PC-3 (cell line): ENCODE measurements at regions of chr11 and their contacts with region 1.

Region 1: GRCh38 chr11:125874556-125875124 is 12.8 kb upstream of the HYLS1 start:
- DNase-seq: peak; percentile 90
- ATAC-seq: peak; percentile 99
- H3K4me3 ChIP-seq: peak overlapping the region; percentile 51
- H3K27ac ChIP-seq: no peak overlapping the region
- H3K4me1 ChIP-seq: 0 out of 2 replicates have a peak, but pooled peaks cover 3% of the 10 kb centered on the region
- H3K27me3 ChIP-seq: no peaks in the 10 kb centered on the region
- CTCF ChIP-seq: peak; percentile 94

Region 2: GRCh38 chr11:125164422-125165110 is 710.1 kb before region 1 on chr11 and contains the start of gene PKNOX2:
- CTCF ChIA-PET with region 1: no interaction called
- POLR2A ChIA-PET with region 1: no interaction called
- intact Hi-C with region 1: loop called (anchors 10 kb)
- DNase-seq: peak; percentile 63
- ATAC-seq: peak; percentile 63
- H3K4me3 ChIP-seq: peak within 1 kb of the TSS; percentile 78
- H3K27ac ChIP-seq: no peak within 1 kb of the TSS
- H3K4me1 ChIP-seq: peaks cover 7% of the 10 kb centered on the region; the same call in 1 of the 2 replicates
- H3K27me3 ChIP-seq: peaks cover 28% of the 10 kb centered on the region
- CTCF ChIP-seq: peak; percentile 54
- total RNA-seq, gene PKNOX2: 0.12 TPM in 1 of 2 replicates, not detected in the other

Region 3: DNA sequence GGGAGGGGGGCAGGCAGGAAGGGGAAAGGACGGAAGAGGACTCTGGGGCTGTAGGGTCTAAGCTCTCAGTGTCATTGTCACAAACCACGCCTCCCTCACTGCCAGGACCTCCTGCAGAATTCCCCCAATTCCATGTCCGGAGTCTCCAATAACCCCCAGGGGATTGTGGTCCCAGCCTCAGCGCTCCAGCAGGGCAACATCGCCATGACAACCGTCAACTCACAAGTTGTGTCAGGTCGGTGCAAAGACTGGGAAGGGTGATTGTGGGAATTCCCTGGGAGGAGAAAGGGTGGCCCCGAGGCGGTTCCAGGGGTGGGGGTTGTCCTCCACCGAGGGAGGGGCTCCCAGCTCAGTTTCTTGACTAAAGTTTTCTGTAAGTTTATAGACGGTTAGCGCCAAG is 464.5 kb before region 1 on chr11:
- CTCF ChIA-PET with region 1: no interaction called
- POLR2A ChIA-PET with region 1: no interaction called
- intact Hi-C with region 1: no loop called
- DNase-seq: no peak
- ATAC-seq: no peak
- H3K4me3 ChIP-seq: no peak overlapping the region
- H3K27ac ChIP-seq: no peak overlapping the region
- H3K4me1 ChIP-seq: no peaks in the 10 kb centered on the region
- H3K27me3 ChIP-seq: peaks cover 80% of the 10 kb centered on the region
- CTCF ChIP-seq: no peak

Region 4: GRCh38 chr11:125423247-125423849 is 451.3 kb before region 1 on chr11:
- CTCF ChIA-PET with region 1: no interaction called
- POLR2A ChIA-PET with region 1: no interaction called
- intact Hi-C with region 1: loop called (anchors 5 kb)
- DNase-seq: peak; percentile 52
- ATAC-seq: peak; percentile 58
- H3K4me3 ChIP-seq: no peak overlapping the region
- H3K27ac ChIP-seq: no peak overlapping the region
- H3K4me1 ChIP-seq: no peaks in the 10 kb centered on the region
- H3K27me3 ChIP-seq: peaks cover 76% of the 10 kb centered on the region
- CTCF ChIP-seq: peak; percentile 85

Region 5: DNA sequence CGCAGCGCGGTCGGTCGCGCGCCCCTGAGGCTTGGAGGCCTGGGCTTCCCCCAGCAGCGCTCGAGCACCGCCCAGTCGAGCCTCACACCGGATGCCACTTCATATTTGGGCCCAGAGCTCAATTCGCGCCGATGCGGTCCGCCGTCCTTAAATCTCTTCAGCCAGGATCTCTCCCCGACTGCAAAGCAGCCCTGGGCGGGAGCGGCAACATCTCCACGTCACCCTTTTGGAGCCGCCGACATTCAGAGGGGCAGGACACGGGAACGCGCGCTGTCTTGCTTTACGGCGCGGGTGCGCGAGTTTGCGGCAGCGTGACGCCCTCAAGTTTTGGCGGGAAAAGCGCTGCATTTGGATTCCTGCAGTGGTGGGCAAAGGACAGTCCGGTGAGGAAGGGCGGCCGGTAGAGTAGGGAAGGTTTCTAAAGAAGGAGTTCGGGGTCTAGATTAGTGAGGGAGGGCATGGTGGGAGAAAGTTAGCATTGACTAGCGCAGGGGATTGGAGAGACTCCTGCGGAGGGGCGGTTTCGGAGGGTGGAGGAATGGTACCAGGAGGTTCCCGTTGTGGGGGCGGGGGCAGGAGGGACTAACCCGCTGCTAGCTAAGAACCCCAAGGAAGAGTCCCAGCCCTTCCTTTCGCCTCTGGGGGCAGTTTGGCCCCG is 248.9 kb before region 1 on chr11:
- CTCF ChIA-PET with region 1: no interaction called
- POLR2A ChIA-PET with region 1: no interaction called
- intact Hi-C with region 1: loop called (anchors 1 kb)
- DNase-seq: peak; percentile 96
- ATAC-seq: peak; percentile 65
- H3K4me3 ChIP-seq: peak overlapping the region; percentile 80
- H3K27ac ChIP-seq: peak overlapping the region; percentile 89
- H3K4me1 ChIP-seq: peaks cover 34% of the 10 kb centered on the region
- H3K27me3 ChIP-seq: no peaks in the 10 kb centered on the region
- CTCF ChIP-seq: no peak

Region 6: DNA sequence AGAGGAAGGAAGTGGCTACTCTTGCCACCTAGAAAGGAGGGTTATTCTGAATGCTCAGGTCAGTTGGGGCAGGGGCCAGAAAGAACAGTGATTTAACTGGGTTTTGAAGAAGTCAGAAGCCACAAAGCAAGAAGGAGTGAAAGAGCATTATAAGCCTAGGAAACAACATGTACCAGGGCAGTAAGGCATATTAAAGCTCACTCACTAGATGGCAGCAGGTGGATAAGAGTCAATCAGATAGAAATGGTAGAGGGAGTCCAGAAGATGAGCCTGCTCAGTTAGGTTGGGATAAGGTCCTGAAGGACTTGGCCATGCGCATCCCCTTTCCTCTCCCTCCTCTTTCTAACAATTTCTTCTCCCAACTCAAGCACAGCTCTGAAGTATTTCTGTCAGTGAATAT is 150.5 kb before region 1 on chr11:
- CTCF ChIA-PET with region 1: no interaction called
- POLR2A ChIA-PET with region 1: no interaction called
- intact Hi-C with region 1: loop called (anchors 1 kb)
- DNase-seq: peak; percentile 51
- ATAC-seq: peak; percentile 72
- H3K4me3 ChIP-seq: no peak overlapping the region
- H3K27ac ChIP-seq: no peak overlapping the region
- H3K4me1 ChIP-seq: peaks cover 11% of the 10 kb centered on the region; the same call in 1 of the 2 replicates
- H3K27me3 ChIP-seq: peaks cover 16% of the 10 kb centered on the region; the same call in 1 of the 2 replicates
- CTCF ChIP-seq: peak; percentile 58

Region 7: GRCh38 chr11:125902927-125903710 is 28.5 kb after region 1 on chr11 and contains the start of gene PUS3:
- CTCF ChIA-PET with region 1: no interaction called
- POLR2A ChIA-PET with region 1: no interaction called
- intact Hi-C with region 1: no loop called
- DNase-seq: peak; percentile 90
- ATAC-seq: peak; percentile 97
- H3K4me3 ChIP-seq: peak within 1 kb of the TSS; percentile 90
- H3K27ac ChIP-seq: peak within 1 kb of the TSS; percentile 42
- H3K4me1 ChIP-seq: peaks cover 7% of the 10 kb centered on the region
- H3K27me3 ChIP-seq: peaks cover 12% of the 10 kb centered on the region; the same call in 1 of the 2 replicates
- CTCF ChIP-seq: no peak
- total RNA-seq, gene PUS3: 10.3 and 26.2 TPM in 2 replicates